A549 (cell line): ENCODE measurements at regions of chrX and their contacts with region 1.

Region 1: DNA sequence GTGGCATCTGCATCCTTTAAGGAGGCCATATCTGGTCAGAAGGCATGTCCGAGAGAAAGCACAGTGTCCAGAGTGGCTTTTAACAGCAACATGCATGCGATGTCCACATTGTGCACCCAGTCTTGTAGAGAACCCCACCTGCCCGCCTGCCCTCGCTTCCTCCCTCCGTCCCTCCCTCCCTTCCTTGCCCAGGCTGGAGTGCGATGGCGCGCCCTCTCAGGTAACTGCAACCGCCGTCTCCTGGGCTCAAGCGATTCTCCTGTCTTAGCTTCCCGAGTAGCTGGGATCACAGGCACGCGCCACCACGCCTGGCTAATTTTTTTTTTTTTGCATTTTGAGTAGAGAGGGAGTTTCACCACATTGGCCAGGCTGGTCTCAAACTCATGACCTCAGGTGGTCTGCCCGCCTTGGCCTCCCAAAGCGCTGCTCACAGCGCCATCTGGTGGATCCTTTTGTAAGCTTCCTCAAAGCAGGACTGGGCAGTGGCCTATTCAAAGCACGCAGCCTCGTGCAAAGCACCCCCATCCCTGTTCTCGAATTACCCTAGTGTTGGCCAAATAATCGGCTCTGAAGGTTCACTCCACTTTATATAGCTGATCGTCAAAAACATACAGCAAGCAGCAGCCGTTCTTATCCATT is 15.0 kb downstream of the BRCC3 start:
- DNase-seq: peak; percentile 22 to 65
- ATAC-seq: peak; percentile 64 to 92; a peak in 4 of 6 replicates
- H3K4me3 ChIP-seq: no peak overlapping the region
- H3K27ac ChIP-seq: no peak overlapping the region
- H3K4me1 ChIP-seq: no peaks in the 10 kb centered on the region
- CTCF ChIP-seq: peak; percentile 52
- EP300 ChIP-seq: no peak
- POLR2A ChIP-seq: no peak
- RAD21 ChIP-seq: peak; percentile 53 to 55

Region 2: DNA sequence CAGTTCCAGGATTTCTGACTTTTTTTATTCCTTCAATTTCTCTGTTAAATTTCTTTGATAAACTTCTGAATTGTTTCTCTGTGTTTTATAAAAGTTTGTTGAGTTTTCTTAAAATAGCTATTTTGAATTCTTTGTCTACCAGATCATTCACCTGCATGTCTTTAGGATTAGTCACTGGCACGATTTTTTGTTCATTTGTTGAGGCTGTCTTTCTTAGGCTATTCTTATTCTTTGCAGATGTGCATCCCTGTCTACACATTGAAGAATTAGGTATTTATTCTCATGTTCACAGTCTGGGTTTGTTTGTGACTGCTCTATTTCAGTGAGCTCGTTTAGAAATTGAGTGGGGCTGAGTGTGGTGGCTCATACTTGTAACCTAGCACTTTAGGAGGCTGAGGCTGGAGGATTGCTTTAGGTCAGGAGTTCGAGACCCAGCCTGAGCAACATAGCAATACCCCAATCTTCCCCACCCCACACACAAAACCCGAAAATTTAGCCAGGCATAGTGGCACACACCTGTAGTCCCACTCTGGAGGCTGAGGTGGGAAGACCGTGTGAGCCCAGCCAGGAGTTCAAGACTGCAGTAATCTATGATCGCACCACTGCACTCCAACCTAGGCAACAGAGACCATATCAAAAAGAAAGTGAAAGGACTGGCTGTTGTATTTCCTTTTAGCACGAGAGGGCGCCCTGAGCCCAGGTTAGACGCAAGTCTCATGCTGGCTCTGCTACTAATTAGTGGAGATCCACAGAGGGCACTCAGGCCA is 105.8 kb before region 1 on chrX:
- CTCF ChIA-PET with region 1: interaction called, 11 read pairs
- POLR2A ChIA-PET with region 1: no interaction called
- DNase-seq: peak; percentile 48 to 70
- ATAC-seq: peak; percentile 93 to 97
- H3K4me3 ChIP-seq: peak overlapping the region; percentile 35
- H3K27ac ChIP-seq: peak overlapping the region; percentile 43 to 76; a peak in 3 of 6 replicates
- H3K4me1 ChIP-seq: no peaks in the 10 kb centered on the region
- CTCF ChIP-seq: peak; percentile 87
- EP300 ChIP-seq: no peak
- POLR2A ChIP-seq: no peak
- RAD21 ChIP-seq: peak; percentile 94 to 96